ENCODE measurements at regions of chr11 and their contacts with region 1.

Region 1: GRCh38 chr11:43419460-43419859 is 60.7 kb downstream of the TTC17 start:
- DNase-seq: peak; percentile 57
- H3K4me3 Mint-ChIP-seq: no peak overlapping the region
- H3K27ac Mint-ChIP-seq: no peak overlapping the region
- H3K4me1 Mint-ChIP-seq: no peaks in the 10 kb centered on the region
- H3K27me3 Mint-ChIP-seq: no peaks in the 10 kb centered on the region

Region 2: DNA sequence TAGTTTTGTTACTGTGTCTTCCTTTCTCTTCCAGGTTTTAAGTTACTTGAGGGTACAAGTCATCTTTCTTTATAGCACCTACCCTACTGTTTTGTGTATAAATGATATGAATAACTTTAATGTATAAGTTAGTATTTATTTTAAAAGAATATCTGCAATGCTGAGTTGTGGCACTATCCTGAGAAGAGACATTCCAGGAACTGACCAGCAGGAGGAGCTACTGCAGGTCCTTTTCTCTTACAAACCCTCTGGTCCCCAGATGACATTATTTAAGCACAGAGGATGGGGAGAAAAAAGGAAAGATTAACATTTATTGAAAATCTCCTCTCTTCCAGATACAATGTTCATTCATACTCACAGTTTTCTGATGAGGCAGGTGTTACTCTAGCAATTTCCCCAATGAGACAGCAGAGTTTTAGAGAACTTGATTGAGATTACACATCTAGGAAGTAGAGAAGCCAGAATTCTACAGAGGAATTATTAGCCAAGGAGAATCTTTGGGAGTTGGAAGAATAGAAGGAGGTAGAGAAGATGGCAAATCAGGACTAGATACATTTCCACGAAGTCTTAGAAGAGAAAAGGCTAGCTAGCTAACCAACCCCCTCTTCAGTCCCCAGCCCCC is 648.9 kb before region 1 on chr11:
- CTCF ChIA-PET with region 1: no interaction called
- intact Hi-C with region 1: loop called (anchors 5 kb)
- DNase-seq: peak; percentile 16
- H3K4me3 Mint-ChIP-seq: no peak overlapping the region
- H3K27ac Mint-ChIP-seq: no peak overlapping the region
- H3K4me1 Mint-ChIP-seq: no peaks in the 10 kb centered on the region
- H3K27me3 Mint-ChIP-seq: no peaks in the 10 kb centered on the region

Measured in activated naive CD4-positive, alpha-beta T cell treated with anti-CD3 and anti-CD28 coated beads for 36 hours (primary cell).